B cell (primary cell): ENCODE measurements at regions of chr19 and their contacts with region 1.

Region 1: DNA sequence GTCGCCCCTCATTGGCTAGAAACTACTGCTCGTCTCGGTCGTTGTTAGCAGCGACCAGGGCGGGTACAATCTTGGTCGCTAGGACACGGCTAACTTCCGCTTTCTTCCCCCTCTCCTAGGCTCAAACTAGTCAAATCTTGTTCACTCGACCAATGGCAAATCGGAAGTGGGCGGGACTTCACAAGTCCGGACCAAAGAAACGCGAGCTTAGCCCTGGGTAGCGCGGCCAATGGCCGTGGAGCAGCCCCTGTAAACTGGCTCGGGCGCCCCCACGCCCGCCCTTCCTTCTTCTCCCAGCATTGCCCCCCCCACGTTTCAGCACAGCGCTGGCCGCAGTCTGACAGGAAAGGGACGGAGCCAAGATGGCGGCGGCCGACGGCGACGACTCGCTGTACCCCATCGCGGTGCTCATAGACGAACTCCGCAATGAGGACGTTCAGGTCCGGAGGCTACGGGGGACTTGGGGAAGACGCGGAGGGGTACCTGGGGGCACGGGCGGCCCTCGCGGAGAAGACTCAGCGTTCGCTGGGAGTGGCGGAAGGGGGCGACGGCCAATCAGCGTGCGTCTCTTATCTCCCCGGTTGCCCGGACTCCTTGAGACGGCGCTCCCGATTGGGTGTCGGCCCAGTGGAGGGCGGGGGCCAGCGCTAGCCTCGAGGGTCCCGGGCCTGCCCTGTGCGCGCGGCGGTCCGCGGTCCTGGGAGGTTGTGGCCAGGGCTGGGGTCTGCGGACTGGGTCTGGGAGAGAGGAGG is at the start of gene PPP2R1A:
- DNase-seq: peak; percentile 100
- ATAC-seq: peak; percentile 74
- H3K4me3 ChIP-seq: peak within 1 kb of the TSS; percentile 60 to 100 (median 85)
- H3K4me3 Mint-ChIP-seq: peak within 1 kb of the TSS; percentile 99
- H3K27ac ChIP-seq: peak within 1 kb of the TSS; percentile 89 to 99
- H3K27ac Mint-ChIP-seq: peak within 1 kb of the TSS; percentile 100
- H3K4me1 ChIP-seq: peaks cover 41 to 56% of the 10 kb centered on the region in 2 donors
- H3K4me1 Mint-ChIP-seq: peaks cover 45% of the 10 kb centered on the region
- H3K27me3 ChIP-seq: no peaks in the 10 kb centered on the region
- H3K27me3 Mint-ChIP-seq: no peaks in the 10 kb centered on the region
- CTCF ChIP-seq: no peak
- total RNA-seq, gene PPP2R1A: 202 and 227 TPM in 2 replicates

Region 2: GRCh38 chr19:52155596-52156359 is 34.1 kb before region 1 on chr19:
- CTCF ChIA-PET with region 1: interaction called, 4 read pairs
- POLR2A ChIA-PET with region 1: interaction called, 10 read pairs
- intact Hi-C with region 1: no loop called
- DNase-seq: no peak
- ATAC-seq: no peak
- H3K4me3 ChIP-seq: peak overlapping the region in 1 of 5 experiments; percentile 26
- H3K4me3 Mint-ChIP-seq: no peak overlapping the region
- H3K27ac ChIP-seq: no peak overlapping the region
- H3K27ac Mint-ChIP-seq: no peak overlapping the region
- H3K4me1 ChIP-seq: no peaks in the 10 kb centered on the region
- H3K4me1 Mint-ChIP-seq: no peaks in the 10 kb centered on the region
- H3K27me3 ChIP-seq: no peaks in the 10 kb centered on the region
- H3K27me3 Mint-ChIP-seq: no peaks in the 10 kb centered on the region
- CTCF ChIP-seq: no peak

Region 3: GRCh38 chr19:52171321-52172169 is 18.4 kb before region 1 on chr19 and contains the start of gene ZNF836:
- CTCF ChIA-PET with region 1: interaction called, 7 read pairs
- POLR2A ChIA-PET with region 1: interaction called, 31 read pairs
- intact Hi-C with region 1: loop called (anchors 1 kb)
- DNase-seq: peak; percentile 92
- ATAC-seq: peak; percentile 98
- H3K4me3 ChIP-seq: peak within 1 kb of the TSS; percentile 71 to 100 (median 82)
- H3K4me3 Mint-ChIP-seq: peak within 1 kb of the TSS; percentile 98
- H3K27ac ChIP-seq: peak within 1 kb of the TSS; percentile 66 to 90
- H3K27ac Mint-ChIP-seq: peak within 1 kb of the TSS; percentile 97
- H3K4me1 ChIP-seq: peaks cover 17 to 20% of the 10 kb centered on the region in 2 donors
- H3K4me1 Mint-ChIP-seq: peaks cover 35% of the 10 kb centered on the region
- H3K27me3 ChIP-seq: no peaks in the 10 kb centered on the region
- H3K27me3 Mint-ChIP-seq: no peaks in the 10 kb centered on the region
- CTCF ChIP-seq: no peak
- total RNA-seq, gene ZNF836: 42.0 and 46.4 TPM in 2 replicates

Region 4: DNA sequence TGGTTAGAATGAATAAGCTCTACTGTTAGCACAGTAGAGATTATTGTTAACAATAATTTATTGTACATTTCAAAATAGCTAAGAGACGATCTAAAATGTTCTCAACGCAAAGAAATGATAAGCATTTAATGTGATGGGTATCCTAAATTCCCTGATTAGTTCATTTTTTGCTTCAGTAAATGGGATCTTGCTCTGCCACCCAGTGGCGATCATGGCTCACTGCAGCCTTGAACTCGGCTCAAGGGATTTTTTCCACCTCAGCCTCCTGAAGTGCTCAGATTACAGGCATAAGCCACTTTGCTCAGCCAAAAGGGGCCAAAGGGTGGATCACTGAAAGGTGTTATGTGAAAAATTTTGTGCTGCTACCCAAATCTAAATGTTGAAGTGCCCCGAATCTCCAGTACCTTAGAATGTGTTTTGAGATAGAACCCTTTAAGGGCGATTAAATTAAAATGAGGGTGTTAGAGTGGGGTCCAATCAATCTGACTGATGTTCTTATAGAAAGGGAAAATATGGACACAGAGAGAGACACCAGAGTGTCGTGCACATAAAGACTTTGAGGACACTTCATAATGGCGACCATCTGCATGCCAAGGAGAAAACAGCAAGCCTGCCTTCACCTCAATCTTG is 48.0 kb after region 1 on chr19:
- CTCF ChIA-PET with region 1: interaction called, 8 read pairs
- POLR2A ChIA-PET with region 1: interaction called, 6 read pairs
- intact Hi-C with region 1: loop called (anchors 1 kb)
- DNase-seq: peak; percentile 74
- ATAC-seq: peak; percentile 77
- H3K4me3 ChIP-seq: no peak overlapping the region
- H3K4me3 Mint-ChIP-seq: no peak overlapping the region
- H3K27ac ChIP-seq: no peak overlapping the region
- H3K27ac Mint-ChIP-seq: no peak overlapping the region
- H3K4me1 ChIP-seq: no peaks in the 10 kb centered on the region
- H3K4me1 Mint-ChIP-seq: no peaks in the 10 kb centered on the region
- H3K27me3 ChIP-seq: no peaks in the 10 kb centered on the region
- H3K27me3 Mint-ChIP-seq: no peaks in the 10 kb centered on the region
- CTCF ChIP-seq: peak; percentile 93

Region 5: GRCh38 chr19:52277574-52277925 is 87.6 kb after region 1 on chr19:
- CTCF ChIA-PET with region 1: no interaction called
- POLR2A ChIA-PET with region 1: no interaction called
- intact Hi-C with region 1: no loop called
- DNase-seq: no peak
- ATAC-seq: no peak
- H3K4me3 ChIP-seq: no peak overlapping the region
- H3K4me3 Mint-ChIP-seq: no peak overlapping the region
- H3K27ac ChIP-seq: no peak overlapping the region
- H3K27ac Mint-ChIP-seq: peak overlapping the region; percentile 32
- H3K4me1 ChIP-seq: peaks cover 7 to 15% of the 10 kb centered on the region in 2 donors
- H3K4me1 Mint-ChIP-seq: peaks cover 58% of the 10 kb centered on the region
- H3K27me3 ChIP-seq: no peaks in the 10 kb centered on the region
- H3K27me3 Mint-ChIP-seq: no peaks in the 10 kb centered on the region
- CTCF ChIP-seq: no peak